IMR-90 (cell line): ENCODE measurements at regions of chr1 and their contacts with region 1.

Region 1: DNA sequence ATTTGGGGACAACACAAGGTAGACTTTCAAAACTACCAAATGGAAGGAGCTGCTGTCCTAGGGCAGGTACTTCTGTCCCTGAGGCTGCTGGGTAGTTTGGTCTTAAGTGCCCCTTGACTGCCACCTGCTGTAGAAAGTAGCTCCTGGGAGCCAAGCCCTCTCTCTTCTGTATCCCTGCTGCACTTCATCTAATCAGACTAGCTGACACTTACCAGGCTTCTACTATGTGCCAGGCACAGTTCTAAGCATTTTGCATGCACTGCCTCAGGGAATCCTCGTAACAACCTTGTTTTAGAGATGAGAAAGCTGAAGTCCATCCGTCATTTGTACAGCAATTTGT is 15.9 kb upstream of the SRSF4 start:
- DNase-seq: peak; percentile 62
- ATAC-seq: peak; percentile 37
- H3K4me3 ChIP-seq: no peak overlapping the region
- H3K27ac ChIP-seq: peak overlapping the region; percentile 42; the same call in 1 of the 2 replicates
- H3K4me1 ChIP-seq: peaks cover 26% of the 10 kb centered on the region
- H3K27me3 ChIP-seq: no peaks in the 10 kb centered on the region
- CTCF ChIP-seq: peak; percentile 51
- POLR2A ChIP-seq: no peak
- RAD21 ChIP-seq: peak; percentile 61

Region 2: GRCh38 chr1:27418326-27419185 is 1779.0 kb before region 1 on chr1:
- CTCF ChIA-PET with region 1: no interaction called
- POLR2A ChIA-PET with region 1: no interaction called
- dilution Hi-C with region 1: no loop called
- in situ Hi-C with region 1: no loop called
- intact Hi-C with region 1: no loop called
- DNase-seq: peak; percentile 96
- ATAC-seq: peak; percentile 94
- H3K4me3 ChIP-seq: no peak overlapping the region
- H3K27ac ChIP-seq: peak overlapping the region; percentile 87
- H3K4me1 ChIP-seq: peaks cover 11% of the 10 kb centered on the region
- H3K27me3 ChIP-seq: no peaks in the 10 kb centered on the region
- CTCF ChIP-seq: no peak
- POLR2A ChIP-seq: no peak
- RAD21 ChIP-seq: peak; percentile 41

Region 3: GRCh38 chr1:28642847-28643635 is 554.5 kb before region 1 on chr1 and contains the start of gene TAF12:
- CTCF ChIA-PET with region 1: no interaction called
- POLR2A ChIA-PET with region 1: interaction called, 3 read pairs
- dilution Hi-C with region 1: no loop called
- in situ Hi-C with region 1: no loop called
- intact Hi-C with region 1: loop called (anchors 10 kb)
- DNase-seq: peak; percentile 94
- ATAC-seq: peak; percentile 83
- H3K4me3 ChIP-seq: peak within 1 kb of the TSS; percentile 77
- H3K27ac ChIP-seq: peak within 1 kb of the TSS; percentile 94
- H3K4me1 ChIP-seq: peaks cover 1% of the 10 kb centered on the region
- H3K27me3 ChIP-seq: no peaks in the 10 kb centered on the region
- CTCF ChIP-seq: peak; percentile 51
- POLR2A ChIP-seq: peak; percentile 98
- RAD21 ChIP-seq: peak; percentile 44
- total RNA-seq, gene TAF12: 31.7 and 39.7 TPM in 2 replicates

Region 4: GRCh38 chr1:29181413-29182225 is 15.9 kb before region 1 on chr1 and contains the start of gene SRSF4:
- CTCF ChIA-PET with region 1: interaction called, 17 read pairs
- POLR2A ChIA-PET with region 1: interaction called, 7 read pairs
- dilution Hi-C with region 1: no loop called
- in situ Hi-C with region 1: no loop called
- intact Hi-C with region 1: loop called (anchors 2 kb)
- DNase-seq: peak; percentile 98
- ATAC-seq: peak; percentile 94
- H3K4me3 ChIP-seq: peak within 1 kb of the TSS; percentile 84
- H3K27ac ChIP-seq: peak within 1 kb of the TSS; percentile 97
- H3K4me1 ChIP-seq: peaks cover 10% of the 10 kb centered on the region
- H3K27me3 ChIP-seq: no peaks in the 10 kb centered on the region
- CTCF ChIP-seq: peak; percentile 82
- POLR2A ChIP-seq: peak; percentile 90
- RAD21 ChIP-seq: peak; percentile 59
- total RNA-seq, gene SRSF4: 20.8 and 38.6 TPM in 2 replicates